Sigmoid colon (tissue), 7 donors: ENCODE measurements at regions of chr22 and their contacts with region 1.

Region 1: DNA sequence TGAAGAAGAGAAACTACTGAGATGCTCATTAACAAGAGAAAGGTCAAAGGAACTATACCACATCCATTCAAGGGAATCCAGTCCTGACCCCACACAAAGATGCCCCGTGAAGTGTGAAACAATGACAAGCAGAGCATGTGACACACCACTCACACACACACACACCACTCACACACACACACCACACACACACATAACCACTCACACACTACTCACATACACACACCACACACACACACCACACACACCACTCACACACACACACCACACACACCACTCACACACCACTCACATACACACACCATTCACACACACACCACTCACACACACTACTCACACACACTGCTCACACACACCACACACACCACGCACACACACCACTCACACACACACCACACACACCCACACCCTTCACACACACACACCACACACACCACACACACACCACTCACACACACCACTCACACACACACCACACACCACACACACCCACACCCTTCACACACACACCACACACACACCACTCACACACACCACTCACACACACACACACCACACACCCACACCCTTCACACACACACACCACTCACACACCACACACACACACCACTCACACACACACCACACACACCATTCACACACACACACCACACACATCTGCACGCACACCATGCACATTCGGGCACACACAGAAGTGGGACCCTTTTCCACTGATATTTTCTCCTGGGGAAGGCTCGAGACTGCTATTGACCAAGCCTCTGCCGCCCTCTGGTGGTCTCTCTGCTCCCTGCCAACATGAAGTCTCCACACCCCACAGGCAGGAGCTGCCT is 32.0 kb upstream of the COMT start:
- DNase-seq: peak; percentile 90
- H3K4me3 ChIP-seq: no peak overlapping the region
- H3K27ac ChIP-seq: no peak overlapping the region
- H3K4me1 ChIP-seq: no peaks in the 10 kb centered on the region
- H3K27me3 ChIP-seq: no peaks in the 10 kb centered on the region
- CTCF ChIP-seq: peak; percentile 82 to 93 (median 88)
- EP300 ChIP-seq: no peak
- POLR2A ChIP-seq: no peak

Region 2: GRCh38 chr22:19730655-19731360 is 178.8 kb before region 1 on chr22:
- intact Hi-C with region 1: loop called (anchors 1 kb)
- DNase-seq: peak; percentile 90
- H3K4me3 ChIP-seq: peak overlapping the region in 3 of 4 donors; percentile 26 to 44 (median 42)
- H3K27ac ChIP-seq: no peak overlapping the region
- H3K4me1 ChIP-seq: peaks cover 0 to 10% (median 6%) of the 10 kb centered on the region in 4 donors
- H3K27me3 ChIP-seq: peaks cover 0 to 9% (median 8%) of the 10 kb centered on the region in 3 donors
- CTCF ChIP-seq: peak; percentile 94 to 97 (median 95)
- EP300 ChIP-seq: no peak
- POLR2A ChIP-seq: no peak